ENCODE measurements at regions of chr4 and their contacts with region 1.

Region 1: GRCh38 chr4:98828801-98829200 is 100.1 kb downstream of the EIF4E start:
- DNase-seq: peak; percentile 19
- ATAC-seq: peak; percentile 91
- H3K4me3 ChIP-seq: no peak overlapping the region
- H3K27ac ChIP-seq: no peak overlapping the region
- H3K4me1 ChIP-seq: peaks cover 0 to 6% of the 10 kb centered on the region in 2 experiments; a peak in 1 of 4 replicates
- H3K27me3 ChIP-seq: no peaks in the 10 kb centered on the region
- CTCF ChIP-seq: peak; percentile 43 to 49 (median 44); a peak in 4 of 6 replicates
- POLR2A ChIP-seq: no peak
- RAD21 ChIP-seq: peak; percentile 70

Region 2: GRCh38 chr4:98150092-98150761 is 678.6 kb before region 1 on chr4:
- CTCF ChIA-PET with region 1: no interaction called
- POLR2A ChIA-PET with region 1: no interaction called
- RAD21 ChIA-PET with region 1: no interaction called
- intact Hi-C with region 1: loop called (anchors 10 kb)
- DNase-seq: no peak
- ATAC-seq: no peak
- H3K4me3 ChIP-seq: no peak overlapping the region
- H3K27ac ChIP-seq: no peak overlapping the region
- H3K4me1 ChIP-seq: no peaks in the 10 kb centered on the region
- H3K27me3 ChIP-seq: no peaks in the 10 kb centered on the region
- CTCF ChIP-seq: peak in 2 of 3 experiments; percentile 36 to 46; a peak in 2 of 6 replicates
- POLR2A ChIP-seq: no peak
- RAD21 ChIP-seq: peak; percentile 64

Region 3: DNA sequence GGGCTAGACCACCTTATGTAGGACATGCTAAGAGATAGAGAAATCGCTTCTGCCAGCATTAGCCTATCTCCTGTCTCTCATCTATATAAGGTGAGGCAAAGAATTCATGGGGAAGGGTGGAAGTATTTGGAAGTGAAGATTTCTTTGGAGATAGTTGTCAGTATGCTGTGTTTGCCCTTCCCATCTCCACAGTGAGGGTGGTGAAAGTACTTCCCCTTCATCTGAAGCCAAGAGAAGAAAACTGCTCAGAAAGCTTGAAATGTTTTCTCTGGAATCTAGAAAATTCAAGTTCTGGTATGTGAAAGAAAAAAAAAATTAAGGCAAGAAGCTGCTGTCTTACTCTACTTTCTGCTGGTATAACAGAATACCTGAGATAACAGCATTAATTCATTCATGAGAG is 272.1 kb after region 1 on chr4:
- CTCF ChIA-PET with region 1: no interaction called
- POLR2A ChIA-PET with region 1: no interaction called
- RAD21 ChIA-PET with region 1: no interaction called
- intact Hi-C with region 1: no loop called
- DNase-seq: no peak
- ATAC-seq: no peak
- H3K4me3 ChIP-seq: no peak overlapping the region
- H3K27ac ChIP-seq: no peak overlapping the region
- H3K4me1 ChIP-seq: no peaks in the 10 kb centered on the region
- H3K27me3 ChIP-seq: no peaks in the 10 kb centered on the region
- CTCF ChIP-seq: no peak
- POLR2A ChIP-seq: no peak
- RAD21 ChIP-seq: no peak

Measured in HCT116 (cell line).